ENCODE measurements at regions of chr1 and their contacts with region 1.

Region 1: GRCh38 chr1:160284782-160285344 is at the start of gene PEX19:
- DNase-seq: peak; percentile 95 to 96 (median 95)
- ATAC-seq: peak; percentile 99 to 100 (median 100)
- H3K4me3 ChIP-seq: peak within 1 kb of the TSS; percentile 76 to 98 (median 88)
- H3K27ac ChIP-seq: peak within 1 kb of the TSS; percentile 56 to 92 (median 84)
- H3K4me1 ChIP-seq: peaks cover 0 to 25% (median 18%) of the 10 kb centered on the region in 12 donors
- H3K27me3 ChIP-seq: no peaks in the 10 kb centered on the region
- CTCF ChIP-seq: no peak
- POLR2A ChIP-seq: peak in 1 of 2 donors; percentile 52
- total RNA-seq, gene PEX19: 65.0 to 105 (median 85.7) TPM

Region 2: DNA sequence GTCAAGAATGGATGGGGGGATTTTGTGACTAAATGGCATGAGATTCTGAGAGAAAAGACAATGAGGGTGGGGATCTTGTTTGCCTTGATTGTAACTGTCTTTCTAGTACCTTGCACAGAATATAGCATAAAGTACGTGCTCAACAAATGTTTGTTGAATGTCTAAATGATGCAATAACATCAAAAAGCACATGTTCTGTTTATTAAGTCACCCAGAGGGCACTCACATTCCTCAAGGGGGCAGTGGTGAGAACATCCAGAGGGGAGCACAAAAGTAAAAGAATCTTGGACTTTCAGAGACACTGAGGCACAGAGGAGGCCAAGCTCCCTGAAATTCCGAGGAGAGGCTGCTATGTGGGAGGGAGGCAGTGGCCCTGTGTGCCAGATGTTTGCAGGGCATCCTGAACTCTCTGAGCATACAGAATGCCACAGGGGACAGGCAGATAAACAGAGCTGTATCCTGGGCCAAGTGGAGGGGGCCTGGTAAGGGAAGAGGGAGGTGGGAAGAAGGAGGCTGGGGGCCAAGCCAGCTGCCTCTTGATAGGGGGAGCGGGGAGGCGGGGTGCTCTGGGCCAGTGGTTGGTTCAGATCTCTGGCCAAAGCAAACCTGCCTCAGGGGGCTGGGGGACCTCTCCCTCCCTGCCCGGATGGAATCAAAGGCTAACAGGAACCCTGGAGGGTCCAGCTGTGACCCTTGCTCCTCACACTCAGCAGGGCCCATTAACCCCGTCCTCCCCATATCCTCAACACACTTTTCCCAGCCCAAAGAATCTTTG is 175.8 kb before region 1 on chr1:
- intact Hi-C with region 1: loop called in 1 of 10 experiments (anchors 5 kb)
- DNase-seq: no peak
- ATAC-seq: peak in 1 of 4 donors; percentile 19
- H3K4me3 ChIP-seq: no peak overlapping the region
- H3K27ac ChIP-seq: no peak overlapping the region
- H3K4me1 ChIP-seq: peaks cover 0 to 31% (median 15%) of the 10 kb centered on the region in 12 donors
- H3K27me3 ChIP-seq: no peaks in the 10 kb centered on the region
- CTCF ChIP-seq: peak; percentile 24 to 60 (median 42)
- POLR2A ChIP-seq: no peak

Region 3: DNA sequence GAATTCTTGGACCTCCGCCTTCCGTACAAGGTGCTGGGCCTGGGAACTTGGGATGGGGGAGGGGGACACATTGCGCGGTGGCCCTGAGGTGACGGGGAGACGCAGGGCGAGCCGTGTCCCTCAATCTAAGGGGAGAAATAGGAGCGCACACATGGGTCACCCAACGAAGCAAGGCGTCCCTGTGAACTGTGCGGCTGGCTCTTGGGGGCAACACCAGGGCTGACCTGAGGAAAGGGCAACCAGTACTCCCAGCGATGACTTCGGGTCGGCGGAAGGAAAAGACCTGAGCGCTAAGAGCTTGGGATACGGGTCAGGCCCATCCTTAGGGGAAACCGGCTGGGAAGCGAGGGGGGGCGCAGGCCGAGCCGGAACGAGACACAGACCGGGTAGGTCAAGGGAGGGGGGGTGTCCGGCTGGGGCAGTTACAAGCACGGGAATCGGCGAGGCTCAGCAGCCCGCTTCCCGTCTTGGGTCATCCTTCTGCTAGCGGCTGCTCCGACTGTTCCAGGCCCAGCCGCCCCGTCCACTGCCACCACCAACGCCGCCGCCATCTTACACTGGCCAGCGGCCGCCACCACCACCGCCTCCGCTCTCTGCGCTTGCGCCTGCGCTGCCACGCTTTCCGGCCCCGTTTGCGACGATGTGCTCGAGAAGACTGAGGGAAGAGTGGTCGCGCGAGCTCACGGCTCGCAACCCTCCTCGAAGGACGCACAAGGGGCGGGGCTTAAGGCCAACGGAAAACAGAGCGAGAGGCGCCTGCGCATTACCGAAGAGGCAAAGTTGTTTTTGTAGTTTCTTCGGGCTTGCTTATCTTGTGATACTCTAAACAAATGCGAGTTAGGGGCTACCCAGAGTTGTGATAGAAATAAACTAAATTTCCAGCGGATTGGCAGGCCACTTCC is 22.7 kb before region 1 on chr1 and contains the start of gene DCAF8:
- intact Hi-C with region 1: loop called in 2 of 10 experiments (anchors 2 kb)
- DNase-seq: peak; percentile 98 to 99 (median 99)
- ATAC-seq: peak; percentile 97 to 99 (median 98)
- H3K4me3 ChIP-seq: peak within 1 kb of the TSS; percentile 70 to 97 (median 86)
- H3K27ac ChIP-seq: peak within 1 kb of the TSS; percentile 87 to 99 (median 97)
- H3K4me1 ChIP-seq: peaks cover 0 to 50% (median 37%) of the 10 kb centered on the region in 12 donors
- H3K27me3 ChIP-seq: no peaks in the 10 kb centered on the region
- CTCF ChIP-seq: no peak
- POLR2A ChIP-seq: peak; percentile 50 to 94
- total RNA-seq, gene DCAF8: 111 to 161 (median 131) TPM

Region 4: GRCh38 chr1:160342953-160343869 is 58.3 kb after region 1 on chr1 and contains the starts of genes COPA and NCSTN:
- intact Hi-C with region 1: loop called in 1 of 10 experiments (anchors 5 kb)
- DNase-seq: peak; percentile 92 to 96 (median 94)
- ATAC-seq: peak; percentile 98 to 99 (median 98)
- H3K4me3 ChIP-seq: peak within 1 kb of the TSS; percentile 73 to 97 (median 88)
- H3K27ac ChIP-seq: peak within 1 kb of the TSS; percentile 79 to 94 (median 90)
- H3K4me1 ChIP-seq: peaks cover 0 to 72% (median 30%) of the 10 kb centered on the region in 12 donors
- H3K27me3 ChIP-seq: no peaks in the 10 kb centered on the region
- CTCF ChIP-seq: peak in 2 of 12 donors; percentile 16 to 30
- POLR2A ChIP-seq: peak; percentile 44 to 74
- total RNA-seq, gene COPA: 78.6 to 129 (median 115) TPM
- total RNA-seq, gene NCSTN: 54.1 to 101 (median 72.2) TPM